ENCODE measurements at regions of chr15 and their contacts with region 1.

Region 1: GRCh38 chr15:29170521-29170920 is 99.1 kb downstream of the NSMCE3 start:
- DNase-seq: no peak
- H3K4me3 ChIP-seq: no peak overlapping the region
- H3K27ac ChIP-seq: no peak overlapping the region
- H3K4me1 ChIP-seq: no peaks in the 10 kb centered on the region
- H3K27me3 ChIP-seq: peaks cover 3% of the 10 kb centered on the region
- CTCF ChIP-seq: no peak

Region 2: GRCh38 chr15:29115093-29115991 is 55.2 kb before region 1 on chr15:
- CTCF ChIA-PET with region 1: no interaction called
- POLR2A ChIA-PET with region 1: no interaction called
- intact Hi-C with region 1: loop called (anchors 10 kb)
- DNase-seq: no peak
- H3K4me3 ChIP-seq: no peak overlapping the region
- H3K27ac ChIP-seq: no peak overlapping the region
- H3K4me1 ChIP-seq: no peaks in the 10 kb centered on the region
- H3K27me3 ChIP-seq: no peaks in the 10 kb centered on the region
- CTCF ChIP-seq: peak; percentile 44; the same call in 1 of the 2 replicates

Region 3: GRCh38 chr15:29205186-29205585 is 34.7 kb after region 1 on chr15:
- CTCF ChIA-PET with region 1: no interaction called
- POLR2A ChIA-PET with region 1: no interaction called
- intact Hi-C with region 1: no loop called
- DNase-seq: no peak
- H3K4me3 ChIP-seq: no peak overlapping the region
- H3K27ac ChIP-seq: no peak overlapping the region
- H3K4me1 ChIP-seq: no peaks in the 10 kb centered on the region
- H3K27me3 ChIP-seq: no peaks in the 10 kb centered on the region
- CTCF ChIP-seq: no peak

Region 4: GRCh38 chr15:29511663-29512062 is 341.1 kb after region 1 on chr15:
- CTCF ChIA-PET with region 1: no interaction called
- POLR2A ChIA-PET with region 1: no interaction called
- intact Hi-C with region 1: no loop called
- DNase-seq: no peak
- H3K4me3 ChIP-seq: no peak overlapping the region
- H3K27ac ChIP-seq: no peak overlapping the region
- H3K4me1 ChIP-seq: no peaks in the 10 kb centered on the region
- H3K27me3 ChIP-seq: no peaks in the 10 kb centered on the region
- CTCF ChIP-seq: no peak